Posterior cingulate gyrus (tissue), 11 donors: ENCODE measurements at regions of chr17 and their contacts with region 1.

Region 1: GRCh38 chr17:63827002-63827771 is at the starts of genes FTSJ3 and PSMC5:
- DNase-seq: peak; percentile 95 to 100 (median 97)

Region 2: DNA sequence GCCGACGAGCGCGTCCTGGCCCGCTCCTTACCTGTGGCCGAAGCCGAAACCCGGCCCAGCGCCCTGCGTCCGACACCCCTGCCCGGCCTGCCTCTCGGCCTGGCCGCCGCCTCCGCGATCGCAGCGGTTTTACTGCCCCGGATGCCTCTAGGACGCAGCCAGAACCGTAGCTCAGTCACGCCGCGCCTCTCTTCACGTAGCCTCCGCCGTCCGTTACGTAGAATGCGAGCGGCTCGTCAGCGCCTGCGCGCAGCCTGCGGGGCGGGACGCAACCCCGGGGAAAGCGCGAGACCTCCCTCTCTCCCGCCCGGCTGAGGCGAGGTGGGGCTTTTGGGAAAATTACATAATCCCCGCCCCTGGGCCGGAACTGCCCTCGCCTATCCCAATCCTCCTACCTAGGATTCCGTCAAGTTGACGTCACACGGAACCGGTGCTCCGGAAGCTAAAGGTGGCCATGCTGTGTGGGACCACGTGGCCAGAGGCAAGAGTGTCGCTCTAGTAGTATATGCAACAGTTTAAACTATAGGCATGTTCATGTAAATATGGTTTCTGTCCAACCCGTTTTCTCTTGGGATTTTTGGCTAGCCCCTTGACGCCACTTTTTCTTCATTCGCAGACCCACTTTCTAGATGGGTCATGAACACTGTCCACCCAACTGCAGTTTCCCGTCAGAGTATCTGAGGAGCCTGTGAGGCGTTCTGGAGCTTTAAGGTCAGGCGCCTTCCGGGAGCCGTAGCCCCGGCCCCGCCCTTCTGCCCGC is 53.6 kb before region 1 on chr17 and contains the start of gene CCDC47:
- intact Hi-C with region 1: loop called (anchors 1 kb)
- DNase-seq: peak; percentile 99 to 100 (median 100)

Region 3: DNA sequence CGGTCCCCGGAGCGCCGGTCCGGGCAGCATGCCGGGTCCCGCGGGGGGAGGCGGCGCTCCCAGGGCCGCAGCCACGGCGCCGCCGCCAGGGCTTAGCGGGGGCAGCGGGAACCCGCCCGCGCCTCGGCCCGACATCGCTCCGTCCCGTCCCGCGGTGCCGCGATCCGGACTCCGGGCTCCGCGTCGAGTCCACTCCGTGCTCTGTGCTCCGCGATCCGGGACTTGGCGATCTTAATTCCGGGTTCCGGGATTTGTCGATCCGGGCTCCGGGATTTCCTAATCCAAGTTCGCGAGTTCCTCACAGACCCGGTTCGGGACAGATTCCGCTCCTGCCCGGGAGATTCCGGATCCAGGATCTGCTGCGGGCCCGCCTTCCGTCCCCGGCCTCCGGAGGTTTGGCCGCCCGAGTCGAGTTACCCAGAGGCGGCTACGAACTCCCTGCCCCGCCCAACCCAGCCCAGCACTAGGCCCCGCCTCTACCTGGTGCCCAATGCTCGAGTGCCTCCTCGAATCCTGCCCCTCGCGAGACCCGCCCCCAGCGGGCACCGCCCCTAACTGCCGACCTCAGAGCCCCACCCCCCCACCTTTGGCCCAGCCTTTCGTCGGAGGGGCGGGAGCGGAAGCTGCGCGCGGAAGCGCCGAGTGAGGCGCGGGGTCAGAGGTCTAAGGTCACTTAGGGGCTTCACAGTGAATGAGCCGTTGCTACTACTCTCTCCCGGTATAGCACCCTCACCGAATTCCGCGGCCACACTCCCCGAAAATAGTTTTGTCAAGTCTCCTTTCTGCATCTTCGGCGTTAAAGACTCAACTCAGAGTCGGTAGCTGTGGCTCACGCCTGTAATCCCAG is 15.6 kb after region 1 on chr17 and contains the start of gene SMARCD2:
- intact Hi-C with region 1: loop called (anchors 2 kb)
- DNase-seq: peak; percentile 93 to 100 (median 98)

Region 4: GRCh38 chr17:64694207-64694606 is 867.0 kb after region 1 on chr17:
- intact Hi-C with region 1: no loop called
- DNase-seq: peak in 1 of 10 donors; percentile 43